ENCODE measurements at regions of chr9 and their contacts with region 1.

Region 1: DNA sequence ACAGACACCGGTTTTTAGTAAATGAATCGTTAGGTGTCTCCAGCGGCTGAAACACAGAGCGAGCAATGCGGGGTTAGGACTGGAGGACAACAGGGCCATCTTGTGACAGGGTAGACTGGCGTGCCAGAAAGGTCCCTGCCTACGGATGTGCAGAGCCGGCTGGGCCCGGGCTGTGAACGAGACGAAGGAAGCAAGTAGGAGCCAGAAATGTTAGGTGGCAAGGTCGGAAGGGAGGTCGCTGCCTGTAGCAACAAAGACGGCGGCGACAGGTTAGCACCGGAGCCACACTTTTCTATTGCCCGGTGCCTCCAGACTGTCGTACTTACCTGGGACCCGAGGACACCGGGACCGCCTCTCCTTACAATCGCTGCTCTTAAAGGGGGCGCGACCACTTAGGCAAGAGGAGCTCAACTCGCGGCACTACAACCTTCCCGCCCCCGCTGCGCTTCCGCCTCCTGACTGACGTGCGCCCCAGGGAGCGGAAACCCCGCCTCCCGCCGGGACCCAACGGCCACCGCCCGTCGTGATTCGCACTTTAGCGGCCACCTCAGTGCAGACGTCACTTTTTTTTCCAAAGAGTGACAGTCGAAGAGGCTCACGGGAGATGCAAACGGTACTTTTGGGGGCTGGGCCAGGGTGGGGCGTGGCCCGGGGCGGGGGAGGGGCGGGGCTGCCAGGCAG is at the start of gene INIP:
- DNase-seq: peak; percentile 94 to 99 (median 97)
- ATAC-seq: peak; percentile 90
- H3K4me3 ChIP-seq: peak within 1 kb of the TSS; percentile 83 to 97
- H3K4me3 Mint-ChIP-seq: peak within 1 kb of the TSS; percentile 94
- H3K27ac ChIP-seq: peak within 1 kb of the TSS; percentile 95 to 96
- H3K27ac Mint-ChIP-seq: peak within 1 kb of the TSS; percentile 98
- H3K4me1 ChIP-seq: peaks cover 15% of the 10 kb centered on the region
- H3K4me1 Mint-ChIP-seq: peaks cover 30% of the 10 kb centered on the region
- H3K27me3 ChIP-seq: no peaks in the 10 kb centered on the region
- H3K27me3 Mint-ChIP-seq: no peaks in the 10 kb centered on the region
- CTCF ChIP-seq: no peak
- total RNA-seq, gene INIP: 11.7 to 17.2 TPM

Region 2: DNA sequence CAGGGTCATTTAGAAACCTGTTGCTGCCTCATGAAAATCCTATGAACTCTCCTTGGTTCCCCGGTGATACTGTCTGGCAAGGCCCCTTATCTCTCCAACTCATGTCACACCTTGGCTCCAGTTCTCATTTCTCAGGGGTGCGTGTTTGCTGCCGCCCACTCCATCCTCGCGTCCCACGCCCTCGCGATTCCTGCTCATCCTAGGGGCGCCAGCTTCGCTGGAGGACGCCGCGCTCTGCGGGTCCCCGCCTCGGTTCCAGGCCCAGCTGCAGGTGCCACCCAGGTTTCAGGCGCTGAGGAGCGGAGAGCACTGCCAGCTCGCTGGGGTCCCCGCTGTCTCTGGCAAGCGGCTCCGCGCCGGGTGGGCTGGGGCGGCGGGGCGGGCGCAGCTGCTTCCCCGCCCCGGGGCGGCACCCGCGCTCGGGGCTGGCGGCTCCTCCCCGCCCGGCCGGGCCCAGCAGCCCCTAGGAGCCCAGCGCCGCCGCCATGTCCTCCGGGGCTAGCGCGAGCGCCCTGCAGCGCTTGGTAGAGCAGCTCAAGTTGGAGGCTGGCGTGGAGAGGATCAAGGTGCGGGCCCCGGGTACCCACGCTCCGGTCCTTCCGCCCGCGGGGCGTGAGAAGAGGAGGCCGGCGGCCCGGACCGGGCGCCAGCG is 1056.5 kb before region 1 on chr9 and contains the start of gene GNG10:
- CTCF ChIA-PET with region 1: no interaction called
- POLR2A ChIA-PET with region 1: no interaction called
- intact Hi-C with region 1: loop called in 1 of 2 experiments (anchors 10 kb)
- DNase-seq: peak; percentile 48 to 82 (median 66)
- ATAC-seq: peak; percentile 95
- H3K4me3 ChIP-seq: peak within 1 kb of the TSS; percentile 70 to 95
- H3K4me3 Mint-ChIP-seq: peak within 1 kb of the TSS; percentile 95
- H3K27ac ChIP-seq: peak within 1 kb of the TSS; percentile 55 to 57
- H3K27ac Mint-ChIP-seq: peak within 1 kb of the TSS; percentile 92
- H3K4me1 ChIP-seq: peaks cover 24% of the 10 kb centered on the region
- H3K4me1 Mint-ChIP-seq: peaks cover 40% of the 10 kb centered on the region
- H3K27me3 ChIP-seq: no peaks in the 10 kb centered on the region
- H3K27me3 Mint-ChIP-seq: no peaks in the 10 kb centered on the region
- CTCF ChIP-seq: no peak
- total RNA-seq, gene GNG10: 1.6 to 2.6 TPM

Region 3: GRCh38 chr9:112174218-112174964 is 543.4 kb before region 1 on chr9:
- CTCF ChIA-PET with region 1: no interaction called
- POLR2A ChIA-PET with region 1: no interaction called
- intact Hi-C with region 1: loop called (anchors 5 to 10 kb)
- DNase-seq: peak; percentile 45 to 87 (median 74)
- ATAC-seq: peak; percentile 70
- H3K4me3 ChIP-seq: peak overlapping the region; percentile 43 to 73
- H3K4me3 Mint-ChIP-seq: peak overlapping the region; percentile 91
- H3K27ac ChIP-seq: peak overlapping the region; percentile 35 to 56
- H3K27ac Mint-ChIP-seq: peak overlapping the region; percentile 87
- H3K4me1 ChIP-seq: peaks cover 46% of the 10 kb centered on the region
- H3K4me1 Mint-ChIP-seq: peaks cover 73% of the 10 kb centered on the region
- H3K27me3 ChIP-seq: no peaks in the 10 kb centered on the region
- H3K27me3 Mint-ChIP-seq: no peaks in the 10 kb centered on the region
- CTCF ChIP-seq: no peak

Region 4: GRCh38 chr9:112443200-112443599 is 274.6 kb before region 1 on chr9:
- CTCF ChIA-PET with region 1: interaction called, 4 read pairs
- POLR2A ChIA-PET with region 1: no interaction called
- intact Hi-C with region 1: loop called (anchors 1 to 2 kb)
- DNase-seq: peak in 5 of 9 experiments; percentile 7 to 60 (median 40)
- ATAC-seq: peak; percentile 48
- H3K4me3 ChIP-seq: no peak overlapping the region
- H3K4me3 Mint-ChIP-seq: no peak overlapping the region
- H3K27ac ChIP-seq: no peak overlapping the region
- H3K27ac Mint-ChIP-seq: no peak overlapping the region
- H3K4me1 ChIP-seq: no peaks in the 10 kb centered on the region
- H3K4me1 Mint-ChIP-seq: no peaks in the 10 kb centered on the region
- H3K27me3 ChIP-seq: no peaks in the 10 kb centered on the region
- H3K27me3 Mint-ChIP-seq: no peaks in the 10 kb centered on the region
- CTCF ChIP-seq: peak; percentile 55

Region 5: DNA sequence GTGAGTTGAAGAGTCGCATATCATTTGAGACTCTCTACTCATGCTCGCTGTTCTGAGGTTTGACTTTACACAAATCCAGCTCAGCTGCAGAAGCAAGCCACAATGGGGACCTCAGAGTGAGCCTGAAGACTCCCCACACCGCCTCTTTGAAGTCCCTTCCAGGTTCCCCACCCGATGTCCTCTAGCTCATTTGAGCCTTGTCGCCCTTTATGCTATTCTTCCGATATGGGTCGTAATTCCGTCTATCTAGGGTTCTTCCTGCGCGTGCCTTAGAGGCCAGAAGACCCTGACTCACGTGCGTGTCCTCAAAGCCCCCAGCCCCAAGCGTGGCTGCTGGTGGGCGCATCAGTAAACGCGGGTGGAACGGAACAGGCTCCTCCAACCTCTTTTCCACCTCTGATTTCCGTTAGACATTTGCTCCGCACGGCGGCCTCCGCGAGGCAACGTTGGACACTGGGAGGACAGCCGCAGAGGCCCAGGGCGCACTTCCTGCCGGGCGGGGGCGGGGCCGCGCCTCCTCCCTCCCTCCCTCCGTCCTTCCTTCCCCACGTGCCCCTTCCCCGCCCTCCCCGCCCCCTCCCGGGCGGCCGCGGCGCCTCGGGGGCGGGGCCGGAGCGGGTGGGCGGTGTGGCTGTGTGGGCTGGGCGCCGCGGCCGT is 32.4 kb after region 1 on chr9 and contains the start of gene SNX30:
- CTCF ChIA-PET with region 1: interaction called, 4 read pairs
- POLR2A ChIA-PET with region 1: interaction called, 20 read pairs
- intact Hi-C with region 1: loop called (anchors 1 kb)
- DNase-seq: peak; percentile 42 to 91 (median 78)
- ATAC-seq: peak; percentile 67
- H3K4me3 ChIP-seq: peak within 1 kb of the TSS; percentile 66 to 72
- H3K4me3 Mint-ChIP-seq: peak within 1 kb of the TSS; percentile 91
- H3K27ac ChIP-seq: peak within 1 kb of the TSS; percentile 44 to 83
- H3K27ac Mint-ChIP-seq: peak within 1 kb of the TSS; percentile 94
- H3K4me1 ChIP-seq: peaks cover 47% of the 10 kb centered on the region
- H3K4me1 Mint-ChIP-seq: peaks cover 64% of the 10 kb centered on the region
- H3K27me3 ChIP-seq: no peaks in the 10 kb centered on the region
- H3K27me3 Mint-ChIP-seq: no peaks in the 10 kb centered on the region
- CTCF ChIP-seq: no peak
- total RNA-seq, gene SNX30: 6.0 to 8.1 TPM

Region 6: GRCh38 chr9:112831281-112831851 is 113.6 kb after region 1 on chr9:
- CTCF ChIA-PET with region 1: no interaction called
- POLR2A ChIA-PET with region 1: no interaction called
- intact Hi-C with region 1: no loop called
- DNase-seq: no peak
- ATAC-seq: no peak
- H3K4me3 ChIP-seq: no peak overlapping the region
- H3K4me3 Mint-ChIP-seq: no peak overlapping the region
- H3K27ac ChIP-seq: no peak overlapping the region
- H3K27ac Mint-ChIP-seq: no peak overlapping the region
- H3K4me1 ChIP-seq: no peaks in the 10 kb centered on the region
- H3K4me1 Mint-ChIP-seq: peaks cover 4% of the 10 kb centered on the region
- H3K27me3 ChIP-seq: no peaks in the 10 kb centered on the region
- H3K27me3 Mint-ChIP-seq: no peaks in the 10 kb centered on the region
- CTCF ChIP-seq: no peak

Region 7: DNA sequence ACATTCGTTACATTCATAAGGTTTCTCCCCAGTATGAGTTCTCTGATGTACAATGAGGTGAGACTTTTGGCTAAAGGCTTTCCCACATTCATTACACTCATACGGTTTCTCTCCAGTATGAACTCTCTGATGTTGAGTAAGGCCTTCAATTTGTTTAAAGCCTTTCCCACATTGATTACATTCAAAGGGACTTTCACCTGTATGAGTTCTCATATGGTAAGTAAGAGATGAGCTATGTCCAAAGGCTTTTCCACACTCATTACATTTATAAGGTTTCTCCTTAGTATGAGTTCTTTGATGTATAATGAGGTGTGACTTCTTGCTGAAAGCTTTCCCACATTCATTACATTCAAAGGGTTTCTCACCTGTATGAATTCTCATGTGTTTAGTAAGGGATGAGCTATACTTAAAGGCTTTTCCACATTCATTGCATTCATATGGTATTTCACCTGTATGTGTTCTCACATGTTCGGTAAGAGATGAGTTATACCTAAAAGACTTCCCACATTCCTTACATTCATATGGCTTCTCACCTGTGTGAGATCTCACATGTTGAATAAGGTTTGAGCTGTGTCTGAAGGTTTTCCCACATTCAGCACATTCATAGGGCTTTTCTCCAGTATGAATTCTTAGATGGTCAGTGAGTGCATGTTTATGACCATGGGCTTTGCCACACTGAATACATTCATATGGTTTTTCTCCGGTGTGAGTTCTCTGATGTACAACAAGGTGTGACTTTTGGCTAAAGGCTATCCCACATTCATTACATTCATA is 325.3 kb after region 1 on chr9:
- CTCF ChIA-PET with region 1: no interaction called
- POLR2A ChIA-PET with region 1: no interaction called
- intact Hi-C with region 1: no loop called
- DNase-seq: no peak
- ATAC-seq: no peak
- H3K4me3 ChIP-seq: peak overlapping the region in 1 of 2 experiments; percentile 3
- H3K4me3 Mint-ChIP-seq: no peak overlapping the region
- H3K27ac ChIP-seq: no peak overlapping the region
- H3K27ac Mint-ChIP-seq: no peak overlapping the region
- H3K4me1 ChIP-seq: no peaks in the 10 kb centered on the region
- H3K4me1 Mint-ChIP-seq: no peaks in the 10 kb centered on the region
- H3K27me3 ChIP-seq: peaks cover 0 to 2% of the 10 kb centered on the region in 2 experiments
- H3K27me3 Mint-ChIP-seq: no peaks in the 10 kb centered on the region
- CTCF ChIP-seq: no peak

Region 8: GRCh38 chr9:113401027-113401792 is 683.4 kb after region 1 on chr9 and contains the start of gene ALAD:
- CTCF ChIA-PET with region 1: no interaction called
- POLR2A ChIA-PET with region 1: no interaction called
- intact Hi-C with region 1: loop called in 1 of 2 experiments (anchors 5 kb)
- DNase-seq: peak; percentile 98 to 100 (median 100)
- ATAC-seq: peak; percentile 99
- H3K4me3 ChIP-seq: peak within 1 kb of the TSS; percentile 80 to 81
- H3K4me3 Mint-ChIP-seq: peak within 1 kb of the TSS; percentile 97
- H3K27ac ChIP-seq: peak within 1 kb of the TSS; percentile 53
- H3K27ac Mint-ChIP-seq: peak within 1 kb of the TSS; percentile 92
- H3K4me1 ChIP-seq: peaks cover 16% of the 10 kb centered on the region
- H3K4me1 Mint-ChIP-seq: peaks cover 28% of the 10 kb centered on the region
- H3K27me3 ChIP-seq: no peaks in the 10 kb centered on the region
- H3K27me3 Mint-ChIP-seq: no peaks in the 10 kb centered on the region
- CTCF ChIP-seq: peak; percentile 94
- total RNA-seq, gene ALAD: 11.2 to 11.5 TPM